ENCODE measurements at regions of chr3 and their contacts with region 1.

Region 1: DNA sequence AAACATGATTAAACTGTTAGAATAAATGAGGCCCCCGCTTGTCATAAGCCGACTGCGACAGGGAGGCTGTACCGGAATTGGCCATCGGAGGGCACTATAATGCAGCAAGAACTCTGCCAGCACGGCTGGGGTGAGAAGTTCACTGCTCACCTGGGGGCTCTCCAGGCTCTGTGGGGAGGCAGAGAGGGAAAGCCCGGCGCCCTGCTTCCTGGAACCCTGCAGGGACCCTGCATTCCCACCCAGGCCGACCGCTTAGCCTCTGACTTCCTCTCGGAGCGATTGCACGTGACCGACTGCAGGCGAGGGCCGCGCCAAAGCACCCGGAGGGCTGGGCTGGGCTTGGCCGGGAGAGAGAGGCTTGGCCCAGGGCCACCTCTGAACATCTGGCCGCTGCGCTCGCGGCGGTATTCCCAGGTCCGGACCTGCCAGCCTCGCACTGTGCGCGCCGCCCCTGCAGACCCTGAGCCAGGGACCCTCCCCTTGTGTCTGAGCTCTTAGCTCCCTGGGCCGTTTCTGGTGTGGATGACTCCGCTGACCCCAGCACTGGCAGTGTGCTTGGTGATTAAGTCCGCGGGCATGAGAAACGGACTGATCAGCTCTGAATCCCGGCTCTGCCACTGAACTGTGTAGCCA is 26.2 kb downstream of the DRD3 start:
- DNase-seq: peak; percentile 90
- ATAC-seq: peak; percentile 89

Region 2: DNA sequence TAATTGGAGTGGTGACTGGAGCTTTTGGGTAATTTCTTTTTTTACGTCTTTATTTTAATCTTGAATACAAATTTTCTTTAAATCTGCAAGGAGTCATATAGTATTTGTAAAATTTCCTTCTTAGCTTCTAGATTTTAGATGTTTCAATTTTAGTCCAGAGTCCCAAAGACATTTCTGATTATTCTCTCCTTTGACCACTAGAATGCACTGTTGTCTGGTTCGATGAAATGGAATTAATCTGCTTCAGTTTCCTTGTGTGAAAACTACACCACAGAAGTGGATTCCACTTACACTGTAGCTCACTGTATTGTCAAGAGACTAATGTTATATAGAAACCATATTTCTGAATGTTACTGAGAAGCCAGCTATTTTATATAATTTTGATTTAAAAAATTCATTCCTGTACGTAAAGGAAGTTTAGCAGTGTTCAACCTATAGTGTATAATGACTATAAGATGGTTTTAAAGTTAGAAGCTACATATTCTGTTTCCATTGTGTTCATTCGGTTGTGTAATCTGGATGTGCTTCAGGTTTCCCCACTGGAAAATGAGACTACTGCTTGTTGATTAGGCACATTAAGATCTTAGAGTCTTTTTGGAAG is 307.9 kb before region 1 on chr3:
- intact Hi-C with region 1: loop called (anchors 10 kb)
- DNase-seq: no peak
- ATAC-seq: no peak

Region 3: GRCh38 chr3:114290911-114291901 is 138.6 kb after region 1 on chr3:
- intact Hi-C with region 1: loop called (anchors 10 kb)
- DNase-seq: peak; percentile 80
- ATAC-seq: peak; percentile 31